ENCODE measurements at regions of chr14 and their contacts with region 1.

Region 1: DNA sequence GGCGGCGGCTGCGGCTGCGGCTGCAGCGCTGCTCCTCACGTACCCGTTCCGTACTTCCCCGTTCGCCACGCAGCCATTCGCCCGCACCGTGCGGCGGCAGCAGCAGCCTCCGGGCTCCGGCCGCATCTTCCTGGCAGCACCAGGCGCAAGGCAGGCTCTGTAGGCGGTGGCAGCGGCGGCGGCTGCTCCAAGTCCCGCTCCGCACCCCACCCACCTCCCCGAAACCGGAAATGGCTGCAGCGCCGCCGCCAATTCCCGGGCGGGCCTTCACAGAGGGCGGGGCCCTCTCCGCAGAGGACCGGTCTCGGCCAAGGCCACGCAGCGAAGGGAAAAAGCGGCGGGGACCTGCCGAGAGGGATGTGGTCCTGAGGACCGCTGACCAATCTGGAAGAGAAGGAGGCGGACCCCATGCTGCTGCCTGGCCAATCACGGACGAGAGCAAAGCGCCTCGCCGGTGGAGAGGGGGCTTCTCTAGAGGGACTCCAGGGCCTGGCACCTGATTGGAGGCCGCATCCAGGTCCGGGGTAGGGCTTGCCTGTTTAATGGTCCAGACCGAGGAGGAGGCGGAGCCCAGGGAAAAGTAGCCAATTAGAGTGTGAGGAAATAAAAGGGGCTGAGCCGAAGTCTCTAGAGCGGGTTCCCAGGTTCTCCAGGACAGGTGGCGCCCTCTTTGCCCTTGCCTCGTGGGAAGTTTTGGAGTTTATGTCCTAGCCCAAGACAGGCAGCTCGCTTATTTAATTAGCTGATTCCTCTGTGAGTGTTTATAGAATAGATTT is at the start of gene SPTLC2:
- DNase-seq: peak; percentile 98
- H3K4me3 Mint-ChIP-seq: peak within 1 kb of the TSS; percentile 97
- H3K27ac Mint-ChIP-seq: peak within 1 kb of the TSS; percentile 94
- H3K4me1 Mint-ChIP-seq: peaks cover 42% of the 10 kb centered on the region
- H3K27me3 Mint-ChIP-seq: no peaks in the 10 kb centered on the region
- total RNA-seq, gene SPTLC2: 26.6 and 28.3 TPM in 2 replicates

Region 2: GRCh38 chr14:77376771-77377501 is 239.7 kb before region 1 on chr14 and contains the starts of genes SAMD15 and TMED8:
- intact Hi-C with region 1: loop called (anchors 10 kb)
- DNase-seq: peak; percentile 95
- H3K4me3 Mint-ChIP-seq: peak within 1 kb of the TSS; percentile 93
- H3K27ac Mint-ChIP-seq: peak within 1 kb of the TSS; percentile 92
- H3K4me1 Mint-ChIP-seq: peaks cover 29% of the 10 kb centered on the region
- H3K27me3 Mint-ChIP-seq: peaks cover 16% of the 10 kb centered on the region
- total RNA-seq, gene SAMD15: 0.28 and 0.63 TPM in 2 replicates
- total RNA-seq, gene TMED8: 31.1 and 32.1 TPM in 2 replicates

Region 3: GRCh38 chr14:77554207-77554606 is 62.4 kb before region 1 on chr14:
- intact Hi-C with region 1: loop called (anchors 5 kb)
- DNase-seq: peak; percentile 72
- H3K4me3 Mint-ChIP-seq: peak overlapping the region; percentile 70
- H3K27ac Mint-ChIP-seq: peak overlapping the region; percentile 84
- H3K4me1 Mint-ChIP-seq: peaks cover 19% of the 10 kb centered on the region
- H3K27me3 Mint-ChIP-seq: no peaks in the 10 kb centered on the region

Region 4: GRCh38 chr14:77565289-77565993 is 51.2 kb before region 1 on chr14:
- intact Hi-C with region 1: loop called (anchors 5 kb)
- DNase-seq: no peak
- H3K4me3 Mint-ChIP-seq: no peak overlapping the region
- H3K27ac Mint-ChIP-seq: peak overlapping the region; percentile 28
- H3K4me1 Mint-ChIP-seq: peaks cover 15% of the 10 kb centered on the region
- H3K27me3 Mint-ChIP-seq: no peaks in the 10 kb centered on the region

Region 5: DNA sequence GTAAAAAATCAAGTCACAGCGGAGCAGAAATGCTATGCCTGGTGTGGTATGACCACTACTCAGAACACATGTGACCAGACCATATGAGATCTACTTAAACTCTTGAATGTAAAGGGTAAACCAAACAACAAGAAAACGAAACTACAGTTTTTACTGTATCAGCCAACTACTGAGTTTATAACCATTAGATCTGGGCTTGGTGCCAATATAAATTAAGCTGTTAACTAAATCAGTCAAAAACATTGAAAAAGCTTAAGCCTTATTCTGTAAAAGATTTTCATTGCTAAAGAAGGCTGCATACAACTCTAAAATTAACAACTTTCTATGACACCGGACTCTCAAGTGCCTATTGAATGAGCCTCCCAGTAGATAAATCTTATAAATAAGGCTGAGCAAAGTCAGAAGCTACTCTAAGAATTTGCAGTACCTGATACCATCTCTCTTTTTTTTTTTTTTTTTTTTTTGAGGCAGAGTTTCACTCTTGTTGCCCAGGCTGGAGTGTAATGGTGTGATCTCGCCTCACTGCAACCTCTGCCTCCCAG is 35.6 kb before region 1 on chr14:
- intact Hi-C with region 1: loop called (anchors 5 kb)
- DNase-seq: no peak
- H3K4me3 Mint-ChIP-seq: peak overlapping the region; percentile 61
- H3K27ac Mint-ChIP-seq: peak overlapping the region; percentile 53
- H3K4me1 Mint-ChIP-seq: peaks cover 17% of the 10 kb centered on the region
- H3K27me3 Mint-ChIP-seq: no peaks in the 10 kb centered on the region

Measured in activated CD4-positive, alpha-beta T cell treated with anti-CD3 and anti-CD28 coated beads, Interleukin-2, amount 10 ng/mL, durations not matched to agents 24 days and 14 days (primary cell).